CD8-positive, alpha-beta T cell (primary cell): ENCODE measurements at regions of chr12 and their contacts with region 1.

Region 1: DNA sequence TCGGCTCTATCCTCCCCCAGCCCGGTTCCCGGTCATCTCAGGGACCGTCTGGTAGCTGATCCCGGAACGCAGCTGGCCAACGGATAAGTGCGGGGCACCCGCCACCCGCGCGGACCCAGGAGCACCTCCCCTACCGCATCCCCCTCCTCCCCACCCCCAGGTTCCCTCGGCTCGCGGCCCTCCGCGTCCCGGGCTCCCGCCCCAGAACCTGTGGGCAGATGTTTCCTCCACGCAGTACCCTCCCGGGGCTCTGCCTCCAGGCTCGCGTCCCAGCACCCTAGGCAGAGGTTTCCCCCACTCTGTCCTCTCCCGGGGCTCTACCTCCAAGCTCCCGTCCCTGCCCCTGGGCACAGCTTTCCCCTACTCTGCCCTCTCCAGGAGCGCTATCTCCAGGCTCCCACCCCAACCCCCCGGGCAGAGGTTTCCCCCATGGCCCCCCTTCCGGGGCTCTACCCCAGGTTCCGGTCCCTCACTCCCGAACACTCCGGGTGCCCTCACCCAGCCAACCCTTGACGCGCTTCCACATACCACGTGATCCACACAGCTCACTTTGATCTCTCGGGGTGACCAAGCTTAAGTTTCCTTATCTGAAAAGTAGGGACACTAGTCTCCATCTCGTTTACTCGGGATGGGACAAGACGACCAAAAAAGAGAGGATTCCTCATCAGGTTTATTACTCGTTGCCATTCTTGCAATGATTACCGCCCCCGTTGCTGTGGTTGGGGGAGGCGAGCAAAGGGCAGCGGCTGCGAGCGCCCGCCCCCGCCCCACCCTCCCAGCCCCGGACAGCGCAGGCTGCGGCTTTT is at the start of gene CCDC38:
- DNase-seq: peak; percentile 63 to 92 (median 82)
- ATAC-seq: peak; percentile 92
- H3K4me3 ChIP-seq: peak within 1 kb of the TSS; percentile 67 to 83
- H3K4me3 Mint-ChIP-seq: peak within 1 kb of the TSS; percentile 96
- H3K27ac ChIP-seq: peak within 1 kb of the TSS; percentile 71 to 79
- H3K27ac Mint-ChIP-seq: peak within 1 kb of the TSS; percentile 92
- H3K4me1 ChIP-seq: peaks cover 11% of the 10 kb centered on the region
- H3K4me1 Mint-ChIP-seq: peaks cover 10% of the 10 kb centered on the region
- H3K27me3 ChIP-seq: no peaks in the 10 kb centered on the region
- H3K27me3 Mint-ChIP-seq: no peaks in the 10 kb centered on the region
- CTCF ChIP-seq: no peak
- total RNA-seq, gene CCDC38: not detected

Region 2: GRCh38 chr12:95003213-95003920 is 939.4 kb before region 1 on chr12 and contains the start of gene NDUFA12:
- CTCF ChIA-PET with region 1: no interaction called
- POLR2A ChIA-PET with region 1: no interaction called
- intact Hi-C with region 1: loop called (anchors 2 to 5 kb)
- DNase-seq: peak; percentile 87 to 98 (median 94)
- ATAC-seq: peak; percentile 99
- H3K4me3 ChIP-seq: peak within 1 kb of the TSS; percentile 74 to 97
- H3K4me3 Mint-ChIP-seq: peak within 1 kb of the TSS; percentile 93
- H3K27ac ChIP-seq: peak within 1 kb of the TSS; percentile 64 to 82
- H3K27ac Mint-ChIP-seq: peak within 1 kb of the TSS; percentile 94
- H3K4me1 ChIP-seq: peaks cover 46% of the 10 kb centered on the region
- H3K4me1 Mint-ChIP-seq: peaks cover 57% of the 10 kb centered on the region
- H3K27me3 ChIP-seq: no peaks in the 10 kb centered on the region
- H3K27me3 Mint-ChIP-seq: no peaks in the 10 kb centered on the region
- CTCF ChIP-seq: no peak
- total RNA-seq, gene NDUFA12: 37.4 to 42.4 TPM

Region 3: DNA sequence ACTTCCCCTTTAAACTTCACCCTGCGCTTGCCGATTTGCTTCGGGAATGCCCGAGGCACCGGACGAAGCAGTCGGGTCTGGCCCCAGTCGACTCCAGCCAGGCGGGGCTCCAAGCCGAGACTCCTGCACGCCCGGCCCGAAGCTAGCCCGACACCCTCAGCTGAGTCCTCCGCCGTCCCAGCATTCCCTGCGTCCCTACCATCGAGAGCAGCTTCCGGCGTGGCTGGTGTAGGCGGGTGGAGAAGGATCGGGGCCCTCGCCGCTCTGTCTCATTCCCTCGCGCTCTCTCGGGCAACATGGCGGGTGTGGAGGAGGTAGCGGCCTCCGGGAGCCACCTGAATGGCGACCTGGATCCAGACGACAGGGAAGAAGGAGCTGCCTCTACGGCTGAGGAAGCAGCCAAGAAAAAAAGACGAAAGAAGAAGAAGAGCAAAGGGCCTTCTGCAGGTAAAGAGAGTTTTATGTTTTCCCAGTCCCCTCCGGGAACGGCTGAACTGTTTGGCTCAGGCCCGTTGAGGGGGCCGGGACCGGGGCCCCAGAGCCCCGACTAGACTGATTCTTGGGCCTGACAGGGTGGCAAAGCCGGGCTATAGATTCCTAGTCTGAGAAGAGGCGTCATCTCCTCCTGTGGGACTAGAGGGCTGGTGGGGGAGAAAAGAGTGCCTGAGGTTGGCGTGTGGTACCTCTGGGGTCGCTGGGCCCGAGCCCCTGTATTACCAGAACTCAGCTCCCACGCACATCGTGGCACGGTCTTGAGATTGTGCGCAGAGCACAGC is 468.7 kb before region 1 on chr12 and contains the start of gene METAP2:
- CTCF ChIA-PET with region 1: no interaction called
- POLR2A ChIA-PET with region 1: interaction called, 5 read pairs
- intact Hi-C with region 1: loop called in 1 of 2 experiments (anchors 2 kb)
- DNase-seq: peak; percentile 73 to 94 (median 91)
- ATAC-seq: peak; percentile 97
- H3K4me3 ChIP-seq: peak within 1 kb of the TSS; percentile 77 to 88
- H3K4me3 Mint-ChIP-seq: peak within 1 kb of the TSS; percentile 99
- H3K27ac ChIP-seq: peak within 1 kb of the TSS; percentile 78 to 84
- H3K27ac Mint-ChIP-seq: peak within 1 kb of the TSS; percentile 98
- H3K4me1 ChIP-seq: peaks cover 29% of the 10 kb centered on the region
- H3K4me1 Mint-ChIP-seq: peaks cover 54% of the 10 kb centered on the region
- H3K27me3 ChIP-seq: no peaks in the 10 kb centered on the region
- H3K27me3 Mint-ChIP-seq: no peaks in the 10 kb centered on the region
- CTCF ChIP-seq: no peak
- total RNA-seq, gene METAP2: 68.3 to 69.9 TPM

Region 4: GRCh38 chr12:95721350-95721749 is 221.4 kb before region 1 on chr12:
- CTCF ChIA-PET with region 1: no interaction called
- POLR2A ChIA-PET with region 1: no interaction called
- intact Hi-C with region 1: no loop called
- DNase-seq: no peak
- ATAC-seq: no peak
- H3K4me3 ChIP-seq: no peak overlapping the region
- H3K4me3 Mint-ChIP-seq: no peak overlapping the region
- H3K27ac ChIP-seq: no peak overlapping the region
- H3K27ac Mint-ChIP-seq: no peak overlapping the region
- H3K4me1 ChIP-seq: no peaks in the 10 kb centered on the region
- H3K4me1 Mint-ChIP-seq: no peaks in the 10 kb centered on the region
- H3K27me3 ChIP-seq: no peaks in the 10 kb centered on the region
- H3K27me3 Mint-ChIP-seq: peaks cover 12% of the 10 kb centered on the region
- CTCF ChIP-seq: no peak

Region 5: GRCh38 chr12:95820102-95820703 is 122.5 kb before region 1 on chr12:
- CTCF ChIA-PET with region 1: no interaction called
- POLR2A ChIA-PET with region 1: no interaction called
- intact Hi-C with region 1: no loop called
- DNase-seq: peak in 2 of 9 experiments; percentile 16 to 24
- ATAC-seq: no peak
- H3K4me3 ChIP-seq: no peak overlapping the region
- H3K4me3 Mint-ChIP-seq: no peak overlapping the region
- H3K27ac ChIP-seq: no peak overlapping the region
- H3K27ac Mint-ChIP-seq: no peak overlapping the region
- H3K4me1 ChIP-seq: no peaks in the 10 kb centered on the region
- H3K4me1 Mint-ChIP-seq: no peaks in the 10 kb centered on the region
- H3K27me3 ChIP-seq: no peaks in the 10 kb centered on the region
- H3K27me3 Mint-ChIP-seq: peaks cover 17% of the 10 kb centered on the region
- CTCF ChIP-seq: no peak

Region 6: GRCh38 chr12:95918194-95918993 is 24.3 kb before region 1 on chr12:
- CTCF ChIA-PET with region 1: interaction called, 23 read pairs
- POLR2A ChIA-PET with region 1: interaction called, 8 read pairs
- intact Hi-C with region 1: loop called in 1 of 2 experiments (anchors 2 kb)
- DNase-seq: peak in 8 of 9 experiments; percentile 3 to 77 (median 45)
- ATAC-seq: peak; percentile 99
- H3K4me3 ChIP-seq: no peak overlapping the region
- H3K4me3 Mint-ChIP-seq: no peak overlapping the region
- H3K27ac ChIP-seq: no peak overlapping the region
- H3K27ac Mint-ChIP-seq: no peak overlapping the region
- H3K4me1 ChIP-seq: no peaks in the 10 kb centered on the region
- H3K4me1 Mint-ChIP-seq: no peaks in the 10 kb centered on the region
- H3K27me3 ChIP-seq: no peaks in the 10 kb centered on the region
- H3K27me3 Mint-ChIP-seq: no peaks in the 10 kb centered on the region
- CTCF ChIP-seq: peak; percentile 81

Region 7: GRCh38 chr12:95970905-95971304 is 28.2 kb after region 1 on chr12:
- CTCF ChIA-PET with region 1: no interaction called
- POLR2A ChIA-PET with region 1: no interaction called
- intact Hi-C with region 1: no loop called
- DNase-seq: no peak
- ATAC-seq: no peak
- H3K4me3 ChIP-seq: no peak overlapping the region
- H3K4me3 Mint-ChIP-seq: no peak overlapping the region
- H3K27ac ChIP-seq: no peak overlapping the region
- H3K27ac Mint-ChIP-seq: no peak overlapping the region
- H3K4me1 ChIP-seq: no peaks in the 10 kb centered on the region
- H3K4me1 Mint-ChIP-seq: no peaks in the 10 kb centered on the region
- H3K27me3 ChIP-seq: no peaks in the 10 kb centered on the region
- H3K27me3 Mint-ChIP-seq: no peaks in the 10 kb centered on the region
- CTCF ChIP-seq: no peak

Region 8: GRCh38 chr12:96015672-96016071 is 72.9 kb after region 1 on chr12:
- CTCF ChIA-PET with region 1: no interaction called
- POLR2A ChIA-PET with region 1: no interaction called
- intact Hi-C with region 1: no loop called
- DNase-seq: peak in 1 of 9 experiments; percentile 16
- ATAC-seq: no peak
- H3K4me3 ChIP-seq: no peak overlapping the region
- H3K4me3 Mint-ChIP-seq: no peak overlapping the region
- H3K27ac ChIP-seq: no peak overlapping the region
- H3K27ac Mint-ChIP-seq: no peak overlapping the region
- H3K4me1 ChIP-seq: no peaks in the 10 kb centered on the region
- H3K4me1 Mint-ChIP-seq: no peaks in the 10 kb centered on the region
- H3K27me3 ChIP-seq: no peaks in the 10 kb centered on the region
- H3K27me3 Mint-ChIP-seq: no peaks in the 10 kb centered on the region
- CTCF ChIP-seq: no peak

Region 9: DNA sequence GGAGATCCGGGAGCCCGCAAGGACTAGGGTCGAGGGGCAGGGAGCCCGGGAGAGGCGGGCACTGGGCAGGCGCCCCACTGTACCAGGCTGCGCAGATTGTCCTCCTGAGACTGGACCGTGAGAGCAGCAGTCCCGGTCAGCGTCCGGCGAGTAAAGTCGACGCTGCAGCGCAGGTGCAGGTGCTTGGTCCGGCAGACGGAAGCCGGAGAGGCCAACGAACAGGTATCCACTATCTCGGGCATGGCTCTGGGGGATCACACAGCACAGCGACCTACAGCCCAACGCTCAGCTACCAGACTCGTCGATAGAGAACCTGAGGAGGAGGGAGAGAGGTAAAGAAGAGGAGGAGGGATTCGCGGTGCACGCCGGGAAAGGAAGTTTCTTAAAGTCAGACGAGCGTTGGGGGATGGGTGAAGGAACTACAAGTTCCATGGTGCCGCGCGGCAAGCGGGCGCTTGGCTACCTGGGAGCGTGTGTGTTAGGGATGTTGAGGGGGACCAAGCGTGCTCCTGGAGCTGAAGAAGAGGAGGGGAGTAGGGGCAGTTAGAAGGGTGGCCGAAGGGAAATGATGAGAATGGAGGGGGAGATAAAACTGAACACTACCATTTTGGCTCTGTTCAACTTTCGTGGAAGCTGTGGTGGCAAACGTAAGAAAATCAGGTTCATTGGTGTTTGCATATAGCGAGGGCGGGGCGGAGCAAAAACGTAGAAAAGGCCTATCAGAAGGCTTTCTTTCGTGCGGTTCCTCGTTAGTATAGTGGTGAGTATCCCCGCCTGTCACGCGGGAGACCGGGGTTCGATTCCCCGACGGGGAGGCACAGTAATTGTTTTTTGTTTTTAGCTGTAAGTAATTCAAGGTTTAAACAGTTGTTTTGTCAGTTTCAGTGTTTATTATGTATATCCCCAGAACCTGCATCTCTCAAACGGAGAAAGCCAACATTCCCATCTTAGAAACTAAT is 92.8 kb after region 1 on chr12 and contains the start of gene LTA4H:
- CTCF ChIA-PET with region 1: no interaction called
- POLR2A ChIA-PET with region 1: interaction called, 11 read pairs
- intact Hi-C with region 1: loop called (anchors 2 kb)
- DNase-seq: peak; percentile 90 to 99 (median 97)
- ATAC-seq: peak; percentile 92
- H3K4me3 ChIP-seq: peak within 1 kb of the TSS; percentile 65 to 92
- H3K4me3 Mint-ChIP-seq: no peak within 1 kb of the TSS
- H3K27ac ChIP-seq: peak within 1 kb of the TSS; percentile 68 to 78
- H3K27ac Mint-ChIP-seq: no peak within 1 kb of the TSS
- H3K4me1 ChIP-seq: peaks cover 14% of the 10 kb centered on the region
- H3K4me1 Mint-ChIP-seq: peaks cover 12% of the 10 kb centered on the region
- H3K27me3 ChIP-seq: no peaks in the 10 kb centered on the region
- H3K27me3 Mint-ChIP-seq: no peaks in the 10 kb centered on the region
- CTCF ChIP-seq: no peak
- total RNA-seq, gene LTA4H: 38.4 to 42.9 TPM

Region 10: GRCh38 chr12:96375841-96376604 is 433.3 kb after region 1 on chr12:
- CTCF ChIA-PET with region 1: no interaction called
- POLR2A ChIA-PET with region 1: no interaction called
- intact Hi-C with region 1: loop called in 1 of 2 experiments (anchors 2 kb)
- DNase-seq: no peak
- ATAC-seq: no peak
- H3K4me3 ChIP-seq: no peak overlapping the region
- H3K4me3 Mint-ChIP-seq: peak overlapping the region; percentile 44
- H3K27ac ChIP-seq: peak overlapping the region in 1 of 2 experiments; percentile 79
- H3K27ac Mint-ChIP-seq: peak overlapping the region; percentile 83
- H3K4me1 ChIP-seq: peaks cover 65% of the 10 kb centered on the region
- H3K4me1 Mint-ChIP-seq: peaks cover 83% of the 10 kb centered on the region
- H3K27me3 ChIP-seq: no peaks in the 10 kb centered on the region
- H3K27me3 Mint-ChIP-seq: no peaks in the 10 kb centered on the region
- CTCF ChIP-seq: no peak